ENCODE measurements at regions of chr14 and their contacts with region 1.

Region 1: DNA sequence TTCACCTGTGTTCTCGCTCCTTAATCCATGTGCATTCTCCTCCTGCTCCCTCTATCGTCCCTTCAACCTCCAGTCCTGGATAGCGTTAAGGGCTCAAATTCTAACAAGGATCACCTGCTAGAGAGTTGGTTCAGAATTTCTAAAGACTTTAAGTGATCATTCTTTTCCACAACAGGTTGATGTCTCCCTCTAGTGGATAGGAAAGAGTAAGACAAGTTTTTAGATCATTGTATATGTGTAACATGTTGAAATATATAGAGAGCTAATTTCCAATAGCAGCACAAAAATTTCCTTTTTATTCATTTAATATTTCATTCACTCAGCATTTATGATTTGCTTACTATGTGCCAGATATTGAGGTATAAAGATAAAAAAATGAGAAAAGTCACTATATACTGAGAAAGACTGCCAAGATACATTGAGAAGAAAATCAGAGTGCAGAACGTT is 9.3 kb upstream of the ESR2 start:
- DNase-seq: peak; percentile 26 to 87
- H3K4me3 ChIP-seq: no peak overlapping the region
- H3K4me1 ChIP-seq: no peaks in the 10 kb centered on the region
- H3K27me3 ChIP-seq: no peaks in the 10 kb centered on the region

Region 2: GRCh38 chr14:63795532-63795931 is 508.0 kb before region 1 on chr14:
- in situ Hi-C with region 1: loop called (anchors 5 kb)
- DNase-seq: no peak
- H3K4me3 ChIP-seq: no peak overlapping the region
- H3K4me1 ChIP-seq: no peaks in the 10 kb centered on the region; the same call in 1 of the 2 replicates
- H3K27me3 ChIP-seq: peaks cover 2% of the 10 kb centered on the region

Region 3: DNA sequence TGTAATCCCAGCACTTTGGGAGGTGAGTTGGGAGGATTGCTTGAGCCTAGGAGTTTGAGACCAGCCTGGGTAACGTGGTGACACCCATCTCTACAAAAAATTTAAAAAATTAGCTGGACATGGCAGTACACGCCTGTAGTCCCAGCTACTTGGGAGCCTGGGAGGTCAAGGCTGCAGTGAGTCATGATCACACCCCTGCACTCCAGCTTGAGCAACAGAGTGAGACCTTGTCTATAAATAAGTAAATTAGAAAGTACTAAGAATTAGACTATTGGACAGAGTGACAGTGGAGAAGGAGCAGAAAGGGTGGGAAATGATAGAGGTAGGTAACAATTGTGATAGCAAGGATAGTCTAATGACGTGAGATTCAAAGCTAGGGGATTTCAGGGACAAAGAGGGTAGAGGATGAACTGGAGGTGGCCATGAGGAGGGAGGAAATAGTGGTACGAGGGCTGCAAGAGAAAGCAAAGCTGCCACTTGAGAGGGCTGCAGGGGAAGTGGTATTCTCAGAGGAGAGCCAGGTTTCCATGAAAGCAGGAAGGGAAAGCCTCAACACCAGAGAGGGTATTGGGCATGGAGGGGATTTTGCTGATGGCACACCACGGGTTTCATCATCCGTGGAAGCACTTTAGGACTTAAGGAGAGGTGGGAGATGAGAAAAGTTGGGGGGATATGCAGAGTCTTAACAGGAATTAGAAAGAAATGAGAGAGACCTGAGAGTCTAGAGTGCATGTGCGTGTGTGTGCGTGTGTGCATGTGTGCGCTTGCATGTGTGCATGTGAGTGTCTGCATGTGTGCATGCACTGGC is 365.1 kb before region 1 on chr14:
- in situ Hi-C with region 1: no loop called
- DNase-seq: no peak
- H3K4me3 ChIP-seq: no peak overlapping the region
- H3K4me1 ChIP-seq: peaks cover 14% of the 10 kb centered on the region
- H3K27me3 ChIP-seq: no peaks in the 10 kb centered on the region